ENCODE measurements at regions of chr14 and their contacts with region 1.

Region 1: GRCh38 chr14:72893636-72894321 is at the start of gene DPF3:
- DNase-seq: peak; percentile 98
- H3K4me3 ChIP-seq: peak within 1 kb of the TSS; percentile 46 to 91 (median 76)
- H3K27ac ChIP-seq: peak within 1 kb of the TSS; percentile 45 to 76 (median 71)
- H3K4me1 ChIP-seq: peaks cover 0 to 29% (median 24%) of the 10 kb centered on the region in 4 donors
- H3K27me3 ChIP-seq: peaks cover 7 to 57% (median 11%) of the 10 kb centered on the region in 3 donors
- CTCF ChIP-seq: no peak
- EP300 ChIP-seq: no peak
- POLR2A ChIP-seq: no peak
- total RNA-seq, gene DPF3: 0.28 to 2.9 (median 2.0) TPM

Region 2: DNA sequence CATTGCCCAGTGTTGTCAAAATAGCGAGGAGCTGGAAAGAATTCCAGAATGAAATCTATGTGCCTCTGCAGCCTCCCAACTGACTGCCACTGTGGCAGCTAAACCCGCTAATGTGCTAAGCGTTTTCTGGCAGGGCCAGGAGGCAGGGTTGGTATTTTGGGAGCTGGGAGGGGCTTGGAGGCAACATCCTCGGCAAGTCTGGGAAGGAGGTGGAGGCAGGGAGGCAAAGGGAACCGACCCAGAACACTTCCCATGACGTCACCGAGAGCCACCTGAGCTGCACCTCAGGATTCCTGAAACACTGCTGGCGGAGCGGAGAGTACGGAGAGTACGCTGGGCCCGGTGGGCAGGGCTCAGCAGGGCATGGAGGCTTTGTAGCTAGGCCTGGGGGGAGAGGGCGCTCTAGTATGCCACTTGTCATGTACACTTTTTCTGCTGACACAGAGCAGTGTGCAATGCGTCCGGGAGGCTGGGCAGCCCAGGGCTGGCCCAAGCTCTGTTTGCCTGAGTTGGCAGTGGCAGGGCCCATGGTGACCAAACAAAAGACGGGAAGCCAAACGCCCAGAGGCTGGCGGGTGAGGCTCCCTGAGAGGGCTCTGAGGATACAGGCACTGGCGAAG is 81.4 kb before region 1 on chr14:
- intact Hi-C with region 1: loop called (anchors 5 kb)
- DNase-seq: peak; percentile 83
- H3K4me3 ChIP-seq: peak overlapping the region in 3 of 4 donors; percentile 10 to 22 (median 14)
- H3K27ac ChIP-seq: peak overlapping the region; percentile 63 to 79 (median 76)
- H3K4me1 ChIP-seq: peaks cover 0 to 32% (median 18%) of the 10 kb centered on the region in 4 donors
- H3K27me3 ChIP-seq: no peaks in the 10 kb centered on the region
- CTCF ChIP-seq: no peak
- EP300 ChIP-seq: no peak
- POLR2A ChIP-seq: no peak

Region 3: DNA sequence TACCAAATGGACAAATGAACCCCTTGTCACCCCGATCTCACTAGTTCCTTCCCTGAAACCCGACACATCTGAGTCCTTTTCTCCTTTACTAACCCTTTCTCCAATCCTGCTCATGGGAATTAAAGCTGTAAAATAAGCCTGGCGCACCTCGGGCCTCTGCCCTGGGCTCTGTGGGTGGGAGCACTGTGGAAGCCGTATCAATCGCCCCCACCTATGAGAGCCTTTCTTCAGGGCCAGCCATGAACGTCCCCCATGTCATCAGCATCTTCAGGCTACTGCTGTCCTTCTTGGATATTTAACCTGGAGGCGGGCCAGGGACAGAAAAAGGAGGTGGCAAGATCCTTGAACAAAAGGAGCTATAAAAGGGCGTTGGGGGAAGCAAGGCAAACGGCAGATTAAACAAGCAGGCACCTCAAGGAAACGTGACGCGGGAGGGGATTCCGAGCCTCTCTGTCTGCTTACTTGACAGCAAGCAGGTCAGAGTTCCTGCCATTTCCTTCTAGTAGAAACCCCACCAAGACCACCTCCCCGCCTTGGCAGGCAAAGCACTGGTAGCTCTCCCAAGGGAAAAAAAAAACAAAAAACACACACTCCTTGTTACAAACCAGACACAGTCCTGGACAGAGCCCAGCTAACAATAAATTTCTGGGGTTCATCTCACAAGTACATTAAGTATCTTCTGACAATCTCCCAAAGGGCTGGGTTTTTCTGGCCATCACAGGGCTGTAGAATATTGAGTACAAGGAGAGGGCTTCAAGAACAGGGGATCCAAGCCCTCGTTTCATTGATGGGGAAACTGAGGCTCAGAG is 62.8 kb before region 1 on chr14:
- intact Hi-C with region 1: loop called (anchors 2 kb)
- DNase-seq: peak; percentile 87
- H3K4me3 ChIP-seq: peak overlapping the region in 3 of 4 donors; percentile 17 to 32 (median 31)
- H3K27ac ChIP-seq: peak overlapping the region; percentile 37 to 83 (median 72)
- H3K4me1 ChIP-seq: peaks cover 0 to 24% (median 20%) of the 10 kb centered on the region in 4 donors
- H3K27me3 ChIP-seq: no peaks in the 10 kb centered on the region
- CTCF ChIP-seq: no peak
- EP300 ChIP-seq: peak in 2 of 4 donors; percentile 20 to 51
- POLR2A ChIP-seq: no peak

Region 4: DNA sequence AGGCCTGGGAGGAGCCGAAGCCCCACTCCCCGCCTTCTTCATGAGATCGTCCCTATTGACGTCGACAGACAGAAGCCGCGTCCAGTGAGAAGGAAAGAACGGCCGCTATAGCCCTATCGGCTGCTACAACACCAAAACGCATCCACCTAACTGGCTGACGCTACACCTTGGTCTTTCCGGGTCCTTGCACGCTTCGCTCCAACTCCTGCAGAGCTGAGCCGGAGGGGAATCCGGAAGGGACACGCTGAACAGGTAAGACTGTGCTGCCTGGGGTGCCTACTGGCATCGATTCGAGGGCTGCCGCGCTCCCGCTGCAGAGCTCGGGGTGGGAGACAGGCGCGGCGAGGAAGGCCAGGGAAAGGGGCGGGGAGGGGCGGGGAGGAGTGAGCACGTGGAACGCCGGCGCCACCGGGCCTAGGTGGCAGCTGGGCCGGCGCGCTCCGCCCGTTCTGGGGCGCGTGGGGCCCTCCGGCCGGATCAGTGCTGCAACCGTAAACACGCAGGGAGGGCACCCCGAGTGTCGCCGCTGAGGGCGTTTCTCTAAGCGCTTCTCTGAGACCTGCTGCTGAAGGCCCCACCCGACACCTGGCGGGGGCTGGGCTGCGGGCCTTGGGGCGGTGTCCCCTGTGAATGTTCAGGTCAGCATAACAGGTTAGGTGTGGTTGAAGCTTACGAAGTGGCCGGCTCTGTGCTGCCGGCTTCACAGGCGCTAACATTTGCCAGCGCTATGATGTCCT is 32.7 kb after region 1 on chr14 and contains the start of gene DCAF4:
- intact Hi-C with region 1: loop called (anchors 2 kb)
- DNase-seq: peak; percentile 98
- H3K4me3 ChIP-seq: peak within 1 kb of the TSS; percentile 71 to 87 (median 80)
- H3K27ac ChIP-seq: peak within 1 kb of the TSS; percentile 59 to 81 (median 79)
- H3K4me1 ChIP-seq: peaks cover 0 to 16% (median 6%) of the 10 kb centered on the region in 4 donors
- H3K27me3 ChIP-seq: no peaks in the 10 kb centered on the region
- CTCF ChIP-seq: no peak
- EP300 ChIP-seq: no peak
- POLR2A ChIP-seq: no peak
- total RNA-seq, gene DCAF4: 12.6 to 20.9 (median 16.6) TPM

Region 5: DNA sequence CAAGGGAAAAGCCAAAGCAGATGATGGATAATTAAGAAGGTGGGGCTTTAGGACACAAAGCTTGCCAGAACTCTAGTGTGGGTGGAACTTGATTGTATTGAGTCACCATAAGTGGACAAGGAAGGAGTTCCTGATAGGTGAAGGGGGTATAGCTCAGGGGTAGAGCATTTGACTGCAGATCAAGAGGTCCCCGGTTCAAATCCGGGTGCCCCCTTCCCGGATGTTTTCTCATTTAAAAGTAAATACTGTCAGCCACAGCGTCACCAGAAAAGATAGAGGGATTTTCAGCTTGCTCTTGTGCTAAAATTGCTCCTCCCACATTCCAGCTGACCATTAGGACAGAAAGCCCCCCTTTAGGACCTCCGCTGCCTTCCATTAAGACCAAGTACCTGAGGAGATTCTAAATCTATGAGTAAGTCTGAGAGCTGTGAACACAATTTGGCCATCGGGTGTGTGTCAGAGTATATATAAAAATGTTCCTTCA is 69.1 kb after region 1 on chr14:
- intact Hi-C with region 1: no loop called
- DNase-seq: no peak
- H3K4me3 ChIP-seq: no peak overlapping the region
- H3K27ac ChIP-seq: no peak overlapping the region
- H3K4me1 ChIP-seq: no peaks in the 10 kb centered on the region
- H3K27me3 ChIP-seq: no peaks in the 10 kb centered on the region
- CTCF ChIP-seq: no peak
- EP300 ChIP-seq: no peak
- POLR2A ChIP-seq: no peak